PC-9 (cell line): ENCODE measurements at regions of chr22 and their contacts with region 1.

Region 1: DNA sequence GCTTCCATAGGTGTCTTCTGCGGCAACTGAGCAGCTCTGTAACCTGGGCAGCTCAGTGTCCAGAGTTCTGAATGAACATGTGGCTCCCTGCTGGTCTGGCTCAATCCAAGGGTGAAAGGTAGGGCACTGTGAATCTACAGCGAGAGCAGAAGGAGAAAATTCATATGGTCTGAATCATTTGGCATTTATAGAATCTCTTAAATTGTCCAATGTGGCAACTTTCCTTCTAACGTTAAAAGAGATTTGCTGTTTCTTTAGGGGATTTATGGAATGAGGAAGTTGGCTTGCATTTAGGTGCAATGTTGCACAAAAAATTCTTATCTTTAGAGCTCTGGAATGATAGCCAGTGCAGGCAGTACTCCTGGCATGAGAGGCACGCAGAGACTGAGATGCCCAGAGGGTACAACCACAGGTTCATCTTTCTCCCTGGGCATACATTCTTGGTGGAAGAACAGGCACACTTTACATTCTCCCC is 17.0 kb downstream of the ATXN10 start:
- DNase-seq: peak; percentile 84 to 100
- H3K4me3 ChIP-seq: peak overlapping the region; percentile 32; the same call in 1 of the 2 replicates
- H3K27ac ChIP-seq: peak overlapping the region; percentile 97
- H3K4me1 ChIP-seq: peaks cover 97% of the 10 kb centered on the region
- H3K27me3 ChIP-seq: no peaks in the 10 kb centered on the region
- CTCF ChIP-seq: no peak

Region 2: GRCh38 chr22:45318168-45318557 is 370.5 kb before region 1 on chr22:
- CTCF ChIA-PET with region 1: no interaction called
- POLR2A ChIA-PET with region 1: no interaction called
- intact Hi-C with region 1: no loop called
- DNase-seq: no peak
- H3K4me3 ChIP-seq: no peak overlapping the region
- H3K27ac ChIP-seq: no peak overlapping the region
- H3K4me1 ChIP-seq: no peaks in the 10 kb centered on the region
- H3K27me3 ChIP-seq: no peaks in the 10 kb centered on the region
- CTCF ChIP-seq: no peak

Region 3: GRCh38 chr22:45577746-45578523 is 110.7 kb before region 1 on chr22:
- CTCF ChIA-PET with region 1: interaction called, 3 read pairs
- POLR2A ChIA-PET with region 1: no interaction called
- intact Hi-C with region 1: loop called (anchors 1 kb)
- DNase-seq: peak; percentile 63 to 79
- H3K4me3 ChIP-seq: no peak overlapping the region
- H3K27ac ChIP-seq: no peak overlapping the region
- H3K4me1 ChIP-seq: peaks cover under 1% of the 10 kb centered on the region; the same call in 1 of the 2 replicates
- H3K27me3 ChIP-seq: no peaks in the 10 kb centered on the region
- CTCF ChIP-seq: peak; percentile 99

Region 4: DNA sequence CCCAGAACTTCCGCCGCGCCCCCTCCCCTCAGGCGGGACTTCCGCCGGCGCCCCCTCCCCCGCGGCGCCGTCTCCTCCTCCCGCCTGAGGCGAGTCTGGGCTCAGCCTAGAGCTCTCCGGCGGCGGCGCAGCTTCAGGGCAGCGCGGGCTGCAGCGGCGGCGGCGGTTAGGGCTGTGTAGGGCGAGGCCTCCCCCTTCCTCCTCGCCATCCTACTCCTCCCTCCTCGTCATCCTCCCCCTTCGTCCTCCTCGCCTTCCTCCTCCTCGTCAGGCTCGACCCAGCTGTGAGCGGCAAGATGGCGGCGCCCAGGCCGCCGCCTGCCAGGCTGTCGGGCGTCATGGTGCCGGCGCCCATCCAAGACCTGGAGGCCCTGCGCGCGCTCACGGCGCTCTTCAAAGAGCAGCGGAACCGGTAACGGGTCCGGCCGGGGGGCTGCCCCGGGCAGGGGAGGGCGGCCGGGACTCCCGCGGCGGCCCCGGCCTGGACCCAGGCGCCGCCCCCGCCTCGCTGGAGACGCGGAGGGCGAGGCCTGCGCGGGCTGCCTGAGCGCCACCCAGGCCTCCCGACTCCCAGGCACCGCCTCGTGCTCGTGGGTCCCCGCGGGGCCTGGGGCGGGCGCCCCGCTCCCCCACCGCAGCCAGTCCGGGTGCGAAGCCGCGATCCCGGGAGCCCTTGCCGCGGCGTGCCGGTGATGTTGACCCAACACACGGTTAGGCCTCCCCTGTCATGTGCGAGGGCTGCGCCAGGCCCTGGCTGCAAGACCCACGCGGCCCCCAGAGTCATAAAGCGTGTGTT is 16.7 kb before region 1 on chr22 and contains the start of gene ATXN10:
- CTCF ChIA-PET with region 1: interaction called, 12 read pairs
- POLR2A ChIA-PET with region 1: interaction called, 14 read pairs
- intact Hi-C with region 1: no loop called
- DNase-seq: peak; percentile 53 to 58
- H3K4me3 ChIP-seq: peak within 1 kb of the TSS; percentile 69
- H3K27ac ChIP-seq: peak within 1 kb of the TSS; percentile 73
- H3K4me1 ChIP-seq: peaks cover 51% of the 10 kb centered on the region
- H3K27me3 ChIP-seq: no peaks in the 10 kb centered on the region
- CTCF ChIP-seq: no peak
- total RNA-seq, gene ATXN10: 275 and 303 TPM in 2 replicates

Region 5: DNA sequence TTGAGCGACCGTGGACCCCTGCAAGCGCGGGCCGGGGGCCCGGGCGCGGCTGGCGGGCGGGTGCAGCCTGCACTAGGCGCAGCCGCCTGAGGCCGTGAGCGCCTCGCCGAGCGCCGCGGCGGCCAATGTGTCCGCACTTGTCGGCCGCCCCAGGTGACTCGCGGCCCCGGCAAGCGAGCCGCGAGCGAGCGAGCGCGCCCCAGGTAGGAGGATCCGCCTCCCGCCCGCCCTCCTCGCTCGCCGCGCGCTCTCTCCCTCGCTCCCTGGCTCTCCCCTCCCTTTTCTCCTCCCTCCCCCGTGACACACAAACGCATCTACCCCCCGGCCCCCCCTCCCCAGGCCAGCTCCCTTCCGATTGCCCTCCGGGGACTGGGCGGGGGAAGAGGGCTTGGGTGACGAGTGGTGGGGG is 288.4 kb after region 1 on chr22 and contains the start of gene WNT7B:
- CTCF ChIA-PET with region 1: no interaction called
- POLR2A ChIA-PET with region 1: interaction called, 12 read pairs
- intact Hi-C with region 1: no loop called
- DNase-seq: peak; percentile 79 to 86
- H3K4me3 ChIP-seq: peak within 1 kb of the TSS; percentile 99
- H3K27ac ChIP-seq: no peak within 1 kb of the TSS
- H3K4me1 ChIP-seq: peaks cover 36% of the 10 kb centered on the region
- H3K27me3 ChIP-seq: no peaks in the 10 kb centered on the region
- CTCF ChIP-seq: no peak
- total RNA-seq, gene WNT7B: 66.9 and 75.5 TPM in 2 replicates